ENCODE measurements at regions of chr10 and their contacts with region 1.

Region 1: DNA sequence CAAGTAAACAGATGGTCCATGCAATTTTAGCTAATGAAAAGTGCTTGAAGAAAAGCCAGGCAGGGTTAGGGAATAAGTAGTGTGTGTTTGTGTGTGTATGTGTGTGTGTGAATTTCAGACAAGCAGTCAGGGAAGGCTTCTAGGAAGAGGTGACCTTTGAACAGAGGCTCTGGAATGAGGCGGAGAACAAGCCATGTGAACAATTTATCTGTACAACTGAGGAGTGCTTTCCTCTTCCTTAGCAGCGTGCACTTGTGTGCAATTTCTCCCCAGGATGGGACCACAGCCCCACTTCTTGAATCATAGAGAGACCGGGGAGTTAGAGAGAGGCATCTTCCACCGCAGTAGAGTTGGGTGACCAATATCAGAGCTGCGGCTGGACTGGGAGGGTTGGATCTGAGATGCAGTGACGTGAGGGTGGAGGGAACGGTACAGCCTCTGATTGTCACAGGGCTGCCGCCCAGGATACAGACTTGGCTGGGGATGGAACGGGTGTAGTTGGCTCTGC is 69.2 kb upstream of the FAM171A1 start:
- ATAC-seq: no peak
- H3K4me3 ChIP-seq: no peak overlapping the region
- H3K27ac ChIP-seq: no peak overlapping the region
- H3K4me1 ChIP-seq: peaks cover 0 to 7% of the 10 kb centered on the region in 2 donors

Region 2: DNA sequence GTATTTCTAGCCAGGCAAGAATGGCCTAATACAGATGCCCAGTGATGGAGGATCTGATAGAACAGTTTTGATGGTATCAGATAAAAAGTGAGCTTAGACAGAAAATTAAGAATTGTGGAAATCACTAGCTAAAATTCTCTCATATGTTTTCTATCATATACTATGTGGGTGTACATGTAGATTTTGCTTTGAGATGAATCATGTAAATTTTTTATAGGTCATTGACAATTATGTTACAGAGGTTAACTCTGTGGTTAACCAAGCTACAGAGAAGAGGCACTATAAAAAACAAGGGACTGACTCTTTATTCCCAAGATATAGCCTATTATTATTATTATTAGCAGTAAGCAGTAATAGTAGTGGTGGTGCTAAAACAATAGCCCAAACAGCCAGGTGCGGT is 123.0 kb after region 1 on chr10:
- in situ Hi-C with region 1: no loop called
- ATAC-seq: no peak
- H3K4me3 ChIP-seq: no peak overlapping the region
- H3K27ac ChIP-seq: no peak overlapping the region
- H3K4me1 ChIP-seq: no peaks in the 10 kb centered on the region

Region 3: DNA sequence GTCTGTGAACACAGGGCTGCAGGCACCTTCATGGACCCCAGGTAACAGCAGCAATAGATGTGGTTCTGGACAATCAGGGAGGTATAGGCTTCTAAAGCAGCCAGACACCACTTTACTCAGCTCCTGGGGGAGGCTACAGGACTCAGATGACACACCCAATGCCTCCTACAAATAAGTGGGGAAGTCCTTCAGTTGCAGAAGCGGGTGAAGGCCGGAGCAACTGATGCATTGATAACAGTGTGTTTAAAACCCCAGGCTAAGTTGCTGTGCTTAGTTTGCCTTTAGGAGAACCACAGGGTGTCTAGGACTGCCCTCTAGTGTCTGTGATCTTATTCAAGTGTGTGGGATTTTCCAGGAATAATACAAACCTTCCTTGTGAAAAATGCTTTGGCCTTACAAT is 285.3 kb after region 1 on chr10:
- in situ Hi-C with region 1: loop called (anchors 10 to 25 kb)
- ATAC-seq: peak; percentile 60 to 98 (median 76)
- H3K4me3 ChIP-seq: no peak overlapping the region
- H3K27ac ChIP-seq: no peak overlapping the region
- H3K4me1 ChIP-seq: peaks cover 0 to 6% of the 10 kb centered on the region in 2 donors